Activated B cell treated with CpG ODN at 0.5 μM for 24 hours (primary cell): ENCODE measurements at regions of chr14 and their contacts with region 1.

Region 1: DNA sequence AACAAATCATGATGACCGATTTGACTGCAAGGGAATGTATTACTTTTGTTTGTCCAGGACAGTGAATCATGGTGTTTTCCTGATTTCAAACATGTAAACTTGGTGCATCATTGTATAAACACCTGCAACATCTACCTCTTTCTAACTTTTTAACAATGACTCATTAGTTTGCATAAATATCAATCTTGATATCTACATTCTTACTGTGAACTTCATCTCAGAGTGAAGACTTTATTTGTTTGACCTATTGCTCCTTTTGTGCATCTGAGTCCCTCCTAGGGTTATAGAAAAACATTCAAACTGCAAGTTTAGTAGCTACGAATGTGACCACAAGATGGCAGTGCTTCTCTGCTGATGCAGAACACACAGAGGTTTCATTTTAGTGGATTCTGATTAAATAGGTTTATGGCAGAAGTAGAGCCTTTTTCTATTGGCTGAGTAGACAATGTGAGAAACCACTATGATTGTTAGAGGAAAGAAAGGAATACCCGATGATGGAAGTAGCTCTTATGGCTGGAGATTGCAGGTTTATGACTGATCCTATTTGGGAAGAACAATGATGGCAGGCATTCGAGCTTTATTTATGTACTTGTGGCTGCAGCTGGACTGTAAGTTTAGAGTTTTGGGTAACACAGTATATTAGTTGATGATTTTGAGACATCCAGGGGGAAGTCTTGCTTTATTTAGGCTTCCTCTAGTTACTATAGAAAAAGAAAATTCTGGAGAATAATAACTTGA is 244.2 kb upstream of the OR4E1 start:
- DNase-seq: no peak
- ATAC-seq: peak; percentile 69
- H3K4me3 Mint-ChIP-seq: peak overlapping the region; percentile 48
- H3K27ac Mint-ChIP-seq: peak overlapping the region; percentile 33
- H3K4me1 Mint-ChIP-seq: peaks cover 37% of the 10 kb centered on the region
- H3K27me3 Mint-ChIP-seq: no peaks in the 10 kb centered on the region
- CTCF ChIP-seq: peak; percentile 60

Region 2: DNA sequence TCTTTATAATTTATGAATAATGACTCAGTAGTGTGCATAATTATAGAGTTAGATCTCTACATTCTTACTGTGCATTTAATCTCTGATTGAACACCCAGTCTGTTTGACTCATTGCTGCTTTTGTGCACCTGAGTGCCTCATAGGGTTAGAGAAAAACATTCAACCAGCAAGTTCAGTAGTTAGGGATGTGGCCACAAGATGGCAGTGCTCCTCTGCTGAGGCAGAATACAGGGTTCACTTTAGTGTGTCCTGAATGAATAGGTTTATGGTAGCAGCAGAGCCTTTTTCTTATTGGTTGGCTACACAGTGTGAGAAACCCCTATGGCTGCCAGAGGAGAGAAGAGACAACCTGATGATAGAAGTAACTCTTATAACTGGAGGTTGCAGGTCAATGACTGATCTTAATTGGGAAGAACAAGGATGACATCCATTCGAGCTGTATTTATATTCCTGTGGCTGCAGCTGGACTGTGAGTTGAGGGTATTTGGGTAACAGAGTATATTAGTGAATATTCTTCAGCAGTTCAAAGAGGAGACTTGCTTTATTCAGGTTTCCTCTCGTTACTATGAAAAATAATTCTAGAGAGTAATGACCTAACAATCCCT is 49.3 kb before region 1 on chr14:
- CTCF ChIA-PET with region 1: no interaction called
- POLR2A ChIA-PET with region 1: no interaction called
- intact Hi-C with region 1: no loop called
- DNase-seq: no peak
- ATAC-seq: peak; percentile 58
- H3K4me3 Mint-ChIP-seq: no peak overlapping the region
- H3K27ac Mint-ChIP-seq: no peak overlapping the region
- H3K4me1 Mint-ChIP-seq: no peaks in the 10 kb centered on the region
- H3K27me3 Mint-ChIP-seq: peaks cover 18% of the 10 kb centered on the region
- CTCF ChIP-seq: peak; percentile 70

Region 3: DNA sequence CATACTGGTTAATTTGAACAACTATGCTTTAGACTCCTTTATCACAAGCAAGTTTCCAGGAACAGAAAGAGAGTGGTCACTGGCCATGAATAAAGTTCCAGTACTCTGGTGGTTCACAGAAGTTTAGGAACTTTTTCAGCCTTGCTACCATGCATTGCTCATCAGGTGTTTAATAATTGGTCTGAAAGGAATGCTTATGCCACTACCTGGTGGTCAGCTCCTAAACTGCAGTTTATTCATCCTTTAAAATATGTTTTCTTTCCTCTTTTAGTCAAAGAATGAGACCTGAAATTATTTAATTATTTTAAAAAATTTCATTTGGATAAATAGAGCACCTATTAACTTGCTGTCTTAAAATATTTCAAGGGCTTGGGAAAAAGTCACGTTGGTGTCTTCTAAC is 15.8 kb after region 1 on chr14:
- CTCF ChIA-PET with region 1: interaction called, 59 read pairs
- POLR2A ChIA-PET with region 1: no interaction called
- intact Hi-C with region 1: loop called (anchors 1 kb)
- DNase-seq: no peak
- ATAC-seq: peak; percentile 45
- H3K4me3 Mint-ChIP-seq: no peak overlapping the region
- H3K27ac Mint-ChIP-seq: no peak overlapping the region
- H3K4me1 Mint-ChIP-seq: no peaks in the 10 kb centered on the region
- H3K27me3 Mint-ChIP-seq: peaks cover 2% of the 10 kb centered on the region
- CTCF ChIP-seq: no peak

Region 4: GRCh38 chr14:21978184-21978998 is 60.5 kb after region 1 on chr14:
- CTCF ChIA-PET with region 1: interaction called, 17 read pairs
- POLR2A ChIA-PET with region 1: no interaction called
- intact Hi-C with region 1: loop called (anchors 1 kb)
- DNase-seq: no peak
- ATAC-seq: peak; percentile 45
- H3K4me3 Mint-ChIP-seq: no peak overlapping the region
- H3K27ac Mint-ChIP-seq: no peak overlapping the region
- H3K4me1 Mint-ChIP-seq: no peaks in the 10 kb centered on the region
- H3K27me3 Mint-ChIP-seq: peaks cover 37% of the 10 kb centered on the region
- CTCF ChIP-seq: no peak

Region 5: GRCh38 chr14:22039938-22040775 is 122.3 kb after region 1 on chr14:
- CTCF ChIA-PET with region 1: interaction called, 12 read pairs
- POLR2A ChIA-PET with region 1: no interaction called
- intact Hi-C with region 1: loop called (anchors 2 kb)
- DNase-seq: no peak
- ATAC-seq: no peak
- H3K4me3 Mint-ChIP-seq: no peak overlapping the region
- H3K27ac Mint-ChIP-seq: no peak overlapping the region
- H3K4me1 Mint-ChIP-seq: no peaks in the 10 kb centered on the region
- H3K27me3 Mint-ChIP-seq: peaks cover 36% of the 10 kb centered on the region
- CTCF ChIP-seq: no peak

Region 6: DNA sequence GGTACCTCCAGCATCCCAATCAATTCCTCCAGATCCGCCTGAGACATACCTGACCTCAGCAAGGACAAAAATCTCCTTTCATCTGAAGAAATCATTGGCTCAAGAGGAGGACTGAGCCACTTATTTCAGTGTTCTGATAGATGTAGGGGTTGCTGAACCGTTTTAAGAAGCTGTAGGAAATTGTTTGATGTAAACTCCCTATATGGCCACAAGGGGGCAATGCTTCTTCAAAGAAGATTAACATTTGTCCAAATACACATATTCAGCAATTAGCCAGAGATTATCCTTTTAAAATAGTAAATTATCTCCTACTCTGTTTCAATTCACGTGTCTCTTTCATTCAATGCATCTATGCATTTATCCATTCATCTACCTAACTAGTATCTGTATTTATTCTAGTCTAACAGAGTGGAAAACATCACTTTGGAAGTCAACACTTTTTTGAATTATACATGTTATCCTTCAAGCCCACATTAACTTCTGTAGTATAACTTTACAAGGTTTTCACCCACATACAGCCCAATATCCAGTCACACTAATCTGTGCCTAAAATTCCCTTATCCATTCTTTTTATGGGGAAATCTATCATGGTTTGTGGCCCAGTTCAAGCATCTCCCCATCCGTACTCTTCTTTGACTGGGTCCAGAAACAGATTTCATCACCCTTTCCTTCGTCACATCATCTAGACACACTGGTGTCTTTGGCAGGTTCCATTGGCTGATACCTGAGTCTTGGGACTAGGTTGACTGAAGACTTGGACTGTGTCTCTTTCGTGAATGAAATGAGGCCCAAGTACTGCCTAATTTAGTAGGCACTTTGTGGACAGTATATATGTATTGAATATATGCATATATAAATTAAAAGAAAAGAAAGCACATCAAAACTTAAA is 166.8 kb after region 1 on chr14:
- CTCF ChIA-PET with region 1: interaction called, 3 read pairs
- POLR2A ChIA-PET with region 1: no interaction called
- intact Hi-C with region 1: loop called (anchors 5 kb)
- DNase-seq: no peak
- ATAC-seq: peak; percentile 34
- H3K4me3 Mint-ChIP-seq: no peak overlapping the region
- H3K27ac Mint-ChIP-seq: no peak overlapping the region
- H3K4me1 Mint-ChIP-seq: no peaks in the 10 kb centered on the region
- H3K27me3 Mint-ChIP-seq: peaks cover 46% of the 10 kb centered on the region
- CTCF ChIP-seq: peak; percentile 18

Region 7: GRCh38 chr14:22099942-22100763 is 182.3 kb after region 1 on chr14:
- CTCF ChIA-PET with region 1: interaction called, 6 read pairs
- POLR2A ChIA-PET with region 1: no interaction called
- intact Hi-C with region 1: loop called (anchors 1 kb)
- DNase-seq: no peak
- ATAC-seq: peak; percentile 49
- H3K4me3 Mint-ChIP-seq: no peak overlapping the region
- H3K27ac Mint-ChIP-seq: no peak overlapping the region
- H3K4me1 Mint-ChIP-seq: no peaks in the 10 kb centered on the region
- H3K27me3 Mint-ChIP-seq: peaks cover 43% of the 10 kb centered on the region
- CTCF ChIP-seq: no peak

Region 8: DNA sequence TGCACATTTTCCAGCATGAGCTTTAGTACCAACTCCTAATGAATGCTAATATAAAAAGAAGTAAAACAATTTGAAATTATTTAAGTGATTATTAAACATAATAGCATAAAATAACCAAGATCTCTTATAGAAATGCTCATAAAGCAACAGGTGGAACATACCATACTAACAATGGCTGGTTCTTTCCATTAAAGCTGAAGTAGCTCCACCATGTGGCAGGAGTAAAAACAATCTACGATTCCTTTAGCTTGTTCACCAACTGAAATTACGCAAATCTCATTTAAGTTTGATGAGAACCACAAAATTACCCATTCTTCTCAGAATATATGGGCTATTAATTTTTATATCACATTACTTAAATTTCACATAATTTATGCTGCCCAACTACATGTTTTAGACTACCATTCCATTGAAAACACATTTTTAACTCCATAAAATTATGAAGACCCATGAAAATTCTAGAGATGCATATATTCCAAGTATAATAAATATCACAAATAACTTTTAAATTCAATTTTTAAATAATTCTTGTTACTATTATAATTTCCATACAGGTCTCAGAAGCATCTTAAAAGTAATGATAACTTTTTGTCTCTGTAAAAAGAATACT is 457.6 kb after region 1 on chr14:
- CTCF ChIA-PET with region 1: no interaction called
- POLR2A ChIA-PET with region 1: no interaction called
- intact Hi-C with region 1: loop called (anchors 2 kb)
- DNase-seq: no peak
- ATAC-seq: peak; percentile 65
- H3K4me3 Mint-ChIP-seq: no peak overlapping the region
- H3K27ac Mint-ChIP-seq: no peak overlapping the region
- H3K4me1 Mint-ChIP-seq: peaks cover 5% of the 10 kb centered on the region
- H3K27me3 Mint-ChIP-seq: no peaks in the 10 kb centered on the region
- CTCF ChIP-seq: peak; percentile 46

Region 9: GRCh38 chr14:23861666-23862065 is 1943.8 kb after region 1 on chr14:
- CTCF ChIA-PET with region 1: no interaction called
- POLR2A ChIA-PET with region 1: no interaction called
- intact Hi-C with region 1: no loop called
- DNase-seq: no peak
- ATAC-seq: no peak
- H3K4me3 Mint-ChIP-seq: no peak overlapping the region
- H3K27ac Mint-ChIP-seq: no peak overlapping the region
- H3K4me1 Mint-ChIP-seq: no peaks in the 10 kb centered on the region
- H3K27me3 Mint-ChIP-seq: peaks cover 6% of the 10 kb centered on the region
- CTCF ChIP-seq: no peak